Activated naive CD8-positive, alpha-beta T cell treated with anti-CD3 and anti-CD28 coated beads, Interleukin-2, amount 10 ng/mL, durations not matched to agents 7 days and 5 days (primary cell): ENCODE measurements at regions of chr16 and their contacts with region 1.

Region 1: GRCh38 chr16:22206013-22206841 is at the start of gene EEF2K:
- DNase-seq: peak; percentile 87
- ATAC-seq: peak; percentile 92
- H3K4me3 Mint-ChIP-seq: peak within 1 kb of the TSS; percentile 98
- H3K27ac Mint-ChIP-seq: peak within 1 kb of the TSS; percentile 84
- H3K4me1 Mint-ChIP-seq: peaks cover 31% of the 10 kb centered on the region
- H3K27me3 Mint-ChIP-seq: no peaks in the 10 kb centered on the region
- total RNA-seq, gene EEF2K: 25.7 to 26.1 TPM

Region 2: GRCh38 chr16:22177968-22178934 is 28.0 kb before region 1 on chr16:
- POLR2A ChIA-PET with region 1: no interaction called
- DNase-seq: no peak
- ATAC-seq: no peak
- H3K4me3 Mint-ChIP-seq: no peak overlapping the region
- H3K27ac Mint-ChIP-seq: no peak overlapping the region
- H3K4me1 Mint-ChIP-seq: no peaks in the 10 kb centered on the region
- H3K27me3 Mint-ChIP-seq: no peaks in the 10 kb centered on the region

Region 3: DNA sequence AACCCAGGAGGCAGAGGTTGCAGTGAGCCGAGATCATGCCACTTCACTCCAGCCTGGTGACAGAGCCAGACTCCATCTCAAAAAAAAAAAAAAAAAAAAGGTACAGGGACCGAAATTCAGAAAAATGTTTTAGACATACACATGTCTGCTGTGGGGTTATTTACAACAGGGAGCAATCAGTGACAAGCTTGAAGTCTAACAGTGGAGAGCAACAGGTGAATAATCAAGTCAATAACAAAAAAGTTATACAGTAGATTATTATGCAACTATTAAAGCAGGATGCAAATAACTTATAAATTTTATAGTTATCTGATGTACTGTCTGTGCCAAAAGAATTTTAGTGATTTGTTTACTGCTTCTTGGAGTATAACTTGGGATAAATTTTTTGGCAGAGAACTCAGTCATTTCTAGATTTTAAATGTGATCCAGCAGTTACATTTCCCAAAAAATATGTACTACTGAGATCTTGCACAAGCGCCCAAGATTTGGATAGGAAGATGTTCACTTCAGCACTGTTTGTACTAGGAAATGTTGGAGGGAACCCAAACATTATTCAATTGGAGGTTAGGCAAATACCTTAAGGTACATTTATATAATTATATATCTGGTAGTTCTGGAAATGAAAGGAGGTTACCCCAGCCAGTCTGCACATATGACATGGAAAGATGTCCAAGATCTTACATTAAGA is 33.9 kb after region 1 on chr16:
- POLR2A ChIA-PET with region 1: interaction called, 12 read pairs
- DNase-seq: no peak
- ATAC-seq: no peak
- H3K4me3 Mint-ChIP-seq: no peak overlapping the region
- H3K27ac Mint-ChIP-seq: peak overlapping the region; percentile 93
- H3K4me1 Mint-ChIP-seq: peaks cover 25% of the 10 kb centered on the region
- H3K27me3 Mint-ChIP-seq: no peaks in the 10 kb centered on the region

Region 4: GRCh38 chr16:22297114-22297878 is 91.1 kb after region 1 on chr16 and contains the start of gene POLR3E:
- POLR2A ChIA-PET with region 1: interaction called, 38 read pairs
- DNase-seq: peak; percentile 100
- ATAC-seq: peak; percentile 82
- H3K4me3 Mint-ChIP-seq: peak within 1 kb of the TSS; percentile 93
- H3K27ac Mint-ChIP-seq: peak within 1 kb of the TSS; percentile 95
- H3K4me1 Mint-ChIP-seq: peaks cover 32% of the 10 kb centered on the region
- H3K27me3 Mint-ChIP-seq: peaks cover 2% of the 10 kb centered on the region
- total RNA-seq, gene POLR3E: 53.2 to 56.9 TPM